AG04449 (cell line): ENCODE measurements at regions of chr2 and their contacts with region 1.

Region 1: DNA sequence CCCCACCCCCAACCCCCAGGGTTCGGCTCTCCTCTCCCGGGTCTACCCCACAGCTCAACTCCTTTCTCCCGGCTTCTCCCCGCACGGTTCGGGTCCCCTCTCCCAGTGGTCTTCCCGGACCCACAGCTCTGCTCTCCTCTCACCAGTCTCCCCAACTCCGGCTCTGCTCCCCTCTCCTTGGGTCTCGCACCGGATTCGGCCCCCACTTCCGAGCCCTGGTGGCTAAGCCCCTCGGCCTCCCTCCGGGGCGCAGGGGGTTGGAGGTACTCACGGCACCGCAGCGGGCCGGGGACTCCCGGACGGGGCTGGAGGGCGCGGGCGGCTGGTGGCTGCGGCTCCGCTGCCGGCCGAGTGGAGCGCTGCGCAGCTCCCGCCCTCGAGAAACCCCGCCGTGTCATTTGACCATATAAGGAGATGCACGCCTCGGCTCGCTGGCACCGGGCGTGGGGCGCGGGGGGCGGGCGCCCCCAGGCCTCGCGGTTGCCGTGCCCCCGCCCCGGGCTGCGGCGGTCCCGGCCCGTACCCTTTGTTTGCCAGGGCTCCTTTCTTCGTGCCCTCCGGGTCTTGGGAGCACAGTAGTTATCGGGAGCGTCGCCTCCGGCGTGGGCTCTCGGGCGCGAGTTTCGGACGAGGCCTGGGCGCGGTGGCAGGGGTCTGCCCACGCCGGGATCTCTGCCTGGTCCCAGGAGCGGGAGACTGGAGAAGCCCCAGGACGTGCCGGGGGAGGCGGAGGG is at the start of gene FHL2:
- DNase-seq: no peak
- H3K4me3 ChIP-seq: peak within 1 kb of the TSS; percentile 98
- CTCF ChIP-seq: peak; percentile 63

Region 2: GRCh38 chr2:105409717-105410116 is 10.9 kb after region 1 on chr2:
- CTCF ChIA-PET with region 1: interaction called, 8 read pairs
- POLR2A ChIA-PET with region 1: interaction called, 72 read pairs
- DNase-seq: peak; percentile 77
- H3K4me3 ChIP-seq: no peak overlapping the region
- CTCF ChIP-seq: no peak

Region 3: DNA sequence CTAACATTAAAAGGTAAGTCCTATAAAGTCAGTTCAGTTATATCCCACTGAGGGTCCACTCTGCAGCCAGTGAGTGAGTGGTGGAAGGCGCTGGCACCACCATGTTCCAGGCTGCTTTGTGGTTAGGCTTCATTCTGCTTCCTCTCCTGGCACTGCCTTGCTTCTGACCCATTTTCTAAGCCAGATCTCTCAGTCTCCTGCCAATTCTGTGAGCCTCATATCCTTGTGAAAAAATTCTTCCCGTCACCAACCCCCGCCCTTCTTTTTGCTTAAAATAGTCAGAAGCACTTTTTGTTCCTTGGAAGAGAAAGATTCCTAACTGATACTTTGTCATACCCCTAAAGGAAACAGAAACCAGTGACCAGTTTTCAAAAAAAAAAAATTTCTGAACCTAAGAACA is 206.1 kb after region 1 on chr2:
- CTCF ChIA-PET with region 1: no interaction called
- POLR2A ChIA-PET with region 1: no interaction called
- DNase-seq: no peak
- H3K4me3 ChIP-seq: no peak overlapping the region
- CTCF ChIP-seq: no peak